Sigmoid colon (tissue), 7 donors: ENCODE measurements at regions of chr3 and their contacts with region 1.

Region 1: GRCh38 chr3:126982471-126983175 is at the start of gene PLXNA1:
- DNase-seq: peak; percentile 88
- H3K4me3 ChIP-seq: peak within 1 kb of the TSS; percentile 78 to 93 (median 82)
- H3K27ac ChIP-seq: peak within 1 kb of the TSS; percentile 73 to 86 (median 82)
- H3K4me1 ChIP-seq: peaks cover 0 to 38% (median 28%) of the 10 kb centered on the region in 4 donors
- H3K27me3 ChIP-seq: no peaks in the 10 kb centered on the region
- CTCF ChIP-seq: peak; percentile 85 to 94 (median 89)
- EP300 ChIP-seq: no peak
- POLR2A ChIP-seq: no peak
- total RNA-seq, gene PLXNA1: 7.5 to 29.6 (median 13.0) TPM

Region 2: DNA sequence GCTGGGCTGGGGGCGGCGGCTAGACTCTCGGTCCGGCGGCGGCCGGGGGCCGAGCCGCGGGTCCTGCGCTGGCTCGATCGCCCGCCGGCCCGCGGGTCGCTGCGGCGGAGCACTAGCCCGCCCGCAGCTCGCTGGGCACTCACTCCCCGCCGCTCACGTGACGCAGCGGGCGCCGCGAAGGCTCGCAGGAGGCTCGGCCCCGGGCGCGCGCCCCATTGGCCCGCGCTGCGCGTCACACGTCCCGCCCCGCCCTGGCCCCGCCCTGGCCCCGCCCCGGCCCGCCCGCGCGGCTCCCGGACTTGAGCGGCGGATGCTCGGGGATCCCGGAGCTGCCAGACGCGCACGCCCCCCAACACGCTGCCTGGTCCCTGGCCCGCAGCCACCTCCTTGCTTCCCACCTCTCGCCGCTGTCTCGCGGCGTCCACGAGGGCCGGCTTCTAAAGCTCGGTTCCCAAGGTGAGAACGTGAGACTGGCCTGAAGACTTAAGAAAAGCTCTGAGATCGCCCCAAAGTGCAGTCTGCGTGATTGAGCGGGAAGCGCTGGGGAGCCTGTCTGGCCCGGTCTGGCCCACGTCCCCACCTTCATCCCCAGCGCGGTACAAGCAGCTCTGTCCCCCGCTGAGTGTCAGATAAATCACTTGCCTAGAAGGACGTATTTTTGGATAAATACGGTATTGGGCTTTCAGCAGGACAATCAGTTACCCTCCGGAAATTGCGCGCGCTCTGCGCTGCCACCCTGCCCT is 625.2 kb before region 1 on chr3 and contains the start of gene KLF15:
- intact Hi-C with region 1: no loop called
- DNase-seq: peak; percentile 96
- H3K4me3 ChIP-seq: peak within 1 kb of the TSS; percentile 61 to 97 (median 84)
- H3K27ac ChIP-seq: peak within 1 kb of the TSS; percentile 91 to 96 (median 94)
- H3K4me1 ChIP-seq: peaks cover 0 to 40% (median 35%) of the 10 kb centered on the region in 4 donors
- H3K27me3 ChIP-seq: no peaks in the 10 kb centered on the region
- CTCF ChIP-seq: no peak
- EP300 ChIP-seq: peak in 1 of 4 donors; percentile 21
- POLR2A ChIP-seq: no peak
- total RNA-seq, gene KLF15: 21.9 to 50.2 (median 35.2) TPM

Region 3: DNA sequence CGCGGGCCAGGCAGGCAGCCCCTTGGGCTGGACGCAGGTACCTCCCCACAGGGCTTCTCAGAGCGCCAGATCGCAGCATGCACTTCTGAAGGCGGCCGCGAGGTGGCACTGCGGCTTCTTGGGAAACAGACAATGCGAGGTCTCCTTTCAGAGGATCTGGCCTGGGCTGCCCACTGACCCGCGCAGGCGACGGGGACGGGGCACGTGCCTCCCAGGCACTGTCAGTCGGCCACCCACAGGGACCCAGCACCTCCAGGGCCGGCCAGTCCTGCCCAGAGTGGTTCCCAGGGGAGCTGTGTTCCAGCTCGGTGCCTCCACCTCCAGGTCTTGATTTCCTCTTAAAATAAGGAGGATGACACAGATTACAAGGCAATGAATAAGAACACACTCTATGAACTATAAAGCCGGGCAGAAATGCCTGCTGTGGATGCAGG is 303.3 kb before region 1 on chr3:
- intact Hi-C with region 1: loop called (anchors 2 kb)
- DNase-seq: peak; percentile 87
- H3K4me3 ChIP-seq: no peak overlapping the region
- H3K27ac ChIP-seq: no peak overlapping the region
- H3K4me1 ChIP-seq: peaks cover 0 to 7% (median 3%) of the 10 kb centered on the region in 4 donors
- H3K27me3 ChIP-seq: peaks cover 0 to 12% (median 0%) of the 10 kb centered on the region in 3 donors
- CTCF ChIP-seq: peak; percentile 78 to 97 (median 85)
- EP300 ChIP-seq: no peak
- POLR2A ChIP-seq: no peak

Region 4: DNA sequence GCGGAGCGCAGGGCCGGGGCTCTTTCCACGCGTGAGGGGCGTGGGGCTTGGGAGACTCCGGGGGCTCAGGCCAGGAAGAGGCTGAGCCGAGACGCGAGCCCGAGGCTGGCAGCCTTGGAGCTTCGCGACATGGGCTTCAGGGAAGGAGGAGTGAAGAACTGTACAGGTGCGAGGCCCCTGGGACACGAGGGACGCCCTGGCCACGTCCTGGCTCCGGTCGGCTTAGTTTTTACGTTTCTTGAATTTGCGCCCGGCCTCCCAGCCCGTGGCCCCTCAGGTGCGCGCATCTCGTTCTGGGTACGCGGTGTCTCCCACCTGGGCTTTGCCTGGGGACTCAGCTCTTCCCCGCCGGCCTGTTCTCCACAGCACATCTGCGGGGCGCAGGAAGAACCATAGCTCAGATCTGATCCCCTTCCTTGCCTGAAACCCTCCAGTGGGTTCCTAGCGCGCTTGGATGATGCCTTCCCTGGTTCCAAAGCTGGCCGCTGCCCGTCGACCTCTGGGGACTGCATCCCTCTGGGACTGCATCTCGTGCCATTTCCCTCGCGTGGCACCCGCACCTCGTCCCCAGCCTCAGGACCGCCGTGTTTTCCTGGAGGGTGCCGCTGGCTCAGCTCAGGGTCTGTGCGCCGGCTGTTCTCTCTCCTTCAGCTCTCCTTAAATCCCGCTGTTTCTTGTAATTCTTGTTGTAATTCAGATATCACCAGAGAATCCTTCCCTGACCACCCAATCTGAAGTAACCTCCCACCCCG is 278.0 kb before region 1 on chr3:
- intact Hi-C with region 1: loop called (anchors 5 kb)
- DNase-seq: no peak
- H3K4me3 ChIP-seq: peak overlapping the region; percentile 51 to 84 (median 73)
- H3K27ac ChIP-seq: peak overlapping the region; percentile 10 to 49 (median 41)
- H3K4me1 ChIP-seq: peaks cover 0 to 17% (median 13%) of the 10 kb centered on the region in 4 donors
- H3K27me3 ChIP-seq: no peaks in the 10 kb centered on the region
- CTCF ChIP-seq: no peak
- EP300 ChIP-seq: no peak
- POLR2A ChIP-seq: no peak

Region 5: GRCh38 chr3:126752303-126752842 is 230.2 kb before region 1 on chr3:
- intact Hi-C with region 1: loop called (anchors 2 kb)
- DNase-seq: peak; percentile 85
- H3K4me3 ChIP-seq: no peak overlapping the region
- H3K27ac ChIP-seq: no peak overlapping the region
- H3K4me1 ChIP-seq: peaks cover 0 to 20% (median 18%) of the 10 kb centered on the region in 4 donors
- H3K27me3 ChIP-seq: no peaks in the 10 kb centered on the region
- CTCF ChIP-seq: peak; percentile 49 to 83 (median 82)
- EP300 ChIP-seq: no peak
- POLR2A ChIP-seq: no peak

Region 6: DNA sequence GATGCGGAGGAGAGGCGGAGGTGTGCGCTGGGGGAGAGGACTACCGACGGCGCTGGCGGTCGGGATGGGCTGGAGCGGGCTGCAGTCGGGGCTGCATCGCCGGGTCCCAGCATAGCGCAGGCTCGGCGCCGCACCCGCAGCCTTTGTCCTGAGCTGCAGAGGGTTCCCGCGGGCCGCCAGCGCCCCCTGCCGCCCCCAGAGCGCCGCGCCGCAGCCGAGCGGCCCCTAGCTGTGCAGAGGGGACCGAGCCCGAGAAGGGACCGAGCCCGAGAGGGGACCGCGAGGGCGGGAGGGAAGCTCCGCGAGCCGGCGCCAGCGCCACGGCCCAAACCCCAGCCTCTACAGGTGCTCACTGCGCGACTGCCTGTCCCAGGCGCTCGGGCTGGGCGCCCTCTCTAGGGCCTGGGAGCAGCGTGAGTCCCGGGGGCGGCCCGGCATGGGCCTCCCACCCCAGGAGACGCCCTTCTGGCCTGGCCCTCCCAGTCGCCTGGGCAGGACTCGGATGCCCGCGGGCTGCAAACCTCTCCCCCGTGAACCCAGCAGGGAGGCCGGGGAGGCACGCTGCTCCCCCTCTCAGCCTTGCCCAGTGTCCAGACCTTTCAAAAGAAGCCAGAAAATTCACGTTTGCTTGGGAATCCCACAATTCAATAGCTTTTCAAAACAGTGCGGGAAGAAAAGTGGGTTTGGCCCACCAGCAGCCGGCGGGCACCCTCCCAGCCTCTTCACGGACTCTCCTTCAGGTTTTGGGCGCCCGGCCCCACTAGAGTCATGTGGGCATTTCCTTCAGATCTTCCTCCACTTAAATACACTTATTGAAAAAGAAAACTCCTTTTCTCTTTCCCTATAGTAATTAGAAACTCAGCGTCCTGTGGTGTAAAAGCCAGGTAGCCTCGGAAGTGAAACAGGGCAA is 473.2 kb after region 1 on chr3:
- intact Hi-C with region 1: loop called (anchors 5 kb)
- DNase-seq: peak; percentile 72
- H3K4me3 ChIP-seq: peak overlapping the region in 2 of 4 donors; percentile 11 to 34
- H3K27ac ChIP-seq: no peak overlapping the region
- H3K4me1 ChIP-seq: peaks cover 0 to 24% (median 24%) of the 10 kb centered on the region in 4 donors
- H3K27me3 ChIP-seq: peaks cover 30 to 81% (median 49%) of the 10 kb centered on the region in 3 donors
- CTCF ChIP-seq: peak; percentile 28 to 86 (median 58)
- EP300 ChIP-seq: no peak
- POLR2A ChIP-seq: no peak

Region 7: DNA sequence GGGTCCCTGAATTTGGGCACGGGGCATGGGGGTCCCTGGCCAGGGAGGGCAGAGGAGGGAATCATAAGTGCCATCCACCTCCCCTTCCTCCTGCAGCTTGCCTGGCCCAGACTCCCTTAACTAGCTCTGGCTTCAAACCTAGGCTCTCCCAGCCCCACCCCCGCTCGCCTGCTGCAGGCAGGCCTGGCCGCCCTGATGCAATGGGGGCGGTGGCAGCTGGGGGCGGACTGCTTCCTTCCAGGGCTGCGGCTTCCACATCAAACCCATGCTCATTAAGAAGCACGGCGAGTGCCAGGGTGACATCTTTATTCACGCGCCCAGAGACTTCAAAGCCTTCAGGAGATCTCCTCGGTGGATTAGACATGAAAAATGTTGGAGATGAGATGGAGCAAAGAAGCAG is 484.8 kb after region 1 on chr3:
- intact Hi-C with region 1: no loop called
- DNase-seq: no peak
- H3K4me3 ChIP-seq: no peak overlapping the region
- H3K27ac ChIP-seq: no peak overlapping the region
- H3K4me1 ChIP-seq: no peaks in the 10 kb centered on the region
- H3K27me3 ChIP-seq: no peaks in the 10 kb centered on the region
- CTCF ChIP-seq: no peak
- EP300 ChIP-seq: no peak
- POLR2A ChIP-seq: no peak

Region 8: GRCh38 chr3:127544192-127544802 is 561.7 kb after region 1 on chr3:
- intact Hi-C with region 1: loop called (anchors 5 kb)
- DNase-seq: peak; percentile 76
- H3K4me3 ChIP-seq: no peak overlapping the region
- H3K27ac ChIP-seq: no peak overlapping the region
- H3K4me1 ChIP-seq: peaks cover 0 to 17% (median 10%) of the 10 kb centered on the region in 4 donors
- H3K27me3 ChIP-seq: no peaks in the 10 kb centered on the region
- CTCF ChIP-seq: peak; percentile 17 to 81 (median 52)
- EP300 ChIP-seq: no peak
- POLR2A ChIP-seq: no peak

Region 9: DNA sequence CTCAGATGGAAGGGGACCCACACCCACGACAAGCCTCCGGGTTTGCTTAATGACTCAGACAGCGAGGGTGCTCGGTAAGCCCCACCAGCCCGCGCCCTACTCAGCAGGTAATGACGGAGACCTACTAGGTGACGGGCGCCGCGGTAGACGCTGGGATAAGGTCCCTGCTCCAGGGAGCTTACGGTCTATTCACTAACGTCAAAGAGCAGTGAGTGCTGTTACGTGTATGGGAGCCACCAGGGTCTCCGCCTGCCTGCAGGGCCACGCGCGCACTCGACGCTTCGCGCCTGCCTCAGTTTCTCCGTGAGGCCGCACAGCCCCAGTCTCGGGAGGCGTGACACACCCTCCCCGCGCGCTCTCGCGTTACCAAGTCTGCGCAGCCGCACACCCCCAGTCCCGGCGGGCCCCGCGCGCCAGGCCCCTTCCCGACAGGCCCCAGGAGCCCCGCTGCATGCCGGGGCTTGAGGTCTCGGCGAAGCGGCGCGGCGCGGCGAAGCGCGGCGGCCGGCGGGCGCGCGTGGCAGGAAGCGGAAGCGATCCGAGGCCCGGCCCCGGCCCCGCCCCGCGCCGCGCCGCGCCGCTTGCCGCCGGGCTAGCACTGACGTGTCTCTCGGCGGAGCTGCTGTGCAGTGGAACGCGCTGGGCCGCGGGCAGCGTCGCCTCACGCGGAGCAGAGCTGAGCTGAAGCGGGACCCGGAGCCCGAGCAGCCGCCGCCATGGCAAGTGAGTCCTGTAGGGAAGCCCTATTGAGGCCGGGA is 1069.4 kb after region 1 on chr3 and contains the start of gene SEC61A1:
- intact Hi-C with region 1: loop called (anchors 10 kb)
- DNase-seq: peak; percentile 96
- H3K4me3 ChIP-seq: peak within 1 kb of the TSS; percentile 82 to 99 (median 98)
- H3K27ac ChIP-seq: peak within 1 kb of the TSS; percentile 94 to 97 (median 94)
- H3K4me1 ChIP-seq: peaks cover 0 to 45% (median 33%) of the 10 kb centered on the region in 4 donors
- H3K27me3 ChIP-seq: no peaks in the 10 kb centered on the region
- CTCF ChIP-seq: no peak
- EP300 ChIP-seq: peak in 1 of 4 donors; percentile 29
- POLR2A ChIP-seq: peak; percentile 38 to 60
- total RNA-seq, gene SEC61A1: 52.3 to 82.5 (median 63.0) TPM